Heart left ventricle (tissue), 16 donors: ENCODE measurements at regions of chr4 and their contacts with region 1.

Region 1: GRCh38 chr4:104064646-104065577 is 345.1 kb upstream of the TACR3 start:
- DNase-seq: peak in 3 of 5 donors; percentile 16 to 45 (median 25)
- ATAC-seq: peak in 3 of 4 donors; percentile 63 to 70 (median 69)
- H3K4me3 ChIP-seq: no peak overlapping the region
- H3K27ac ChIP-seq: no peak overlapping the region
- H3K4me1 ChIP-seq: no peaks in the 10 kb centered on the region
- H3K27me3 ChIP-seq: no peaks in the 10 kb centered on the region
- CTCF ChIP-seq: peak in 11 of 12 donors; percentile 27 to 63 (median 48)
- POLR2A ChIP-seq: no peak

Region 2: DNA sequence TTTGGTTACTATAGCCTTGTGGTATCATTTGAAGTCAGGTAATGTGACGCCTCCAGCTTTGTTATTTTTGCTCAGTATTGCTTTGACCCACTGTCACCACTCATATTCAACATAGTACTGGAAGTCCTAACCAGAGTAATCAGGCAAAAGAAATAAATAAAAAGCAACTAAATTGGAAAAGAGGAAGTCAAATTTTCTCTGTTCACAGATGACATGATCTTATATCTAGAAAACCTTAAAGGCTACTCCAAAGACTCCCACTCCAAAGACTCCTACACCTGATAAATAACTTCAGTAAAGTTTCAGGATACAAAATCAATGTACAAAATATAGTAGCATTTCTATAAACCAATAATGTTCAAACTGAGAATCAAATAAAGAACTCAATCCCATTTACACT is 81.1 kb after region 1 on chr4:
- intact Hi-C with region 1: no loop called
- DNase-seq: no peak
- ATAC-seq: no peak
- H3K4me3 ChIP-seq: no peak overlapping the region
- H3K27ac ChIP-seq: no peak overlapping the region
- H3K4me1 ChIP-seq: no peaks in the 10 kb centered on the region
- H3K27me3 ChIP-seq: no peaks in the 10 kb centered on the region
- CTCF ChIP-seq: no peak
- POLR2A ChIP-seq: no peak

Region 3: GRCh38 chr4:104451573-104451972 is 386.7 kb after region 1 on chr4:
- intact Hi-C with region 1: loop called in 1 of 10 experiments (anchors 5 kb)
- DNase-seq: no peak
- ATAC-seq: peak in 1 of 4 donors; percentile 49
- H3K4me3 ChIP-seq: no peak overlapping the region
- H3K27ac ChIP-seq: no peak overlapping the region
- H3K4me1 ChIP-seq: no peaks in the 10 kb centered on the region
- H3K27me3 ChIP-seq: no peaks in the 10 kb centered on the region
- CTCF ChIP-seq: peak in 10 of 12 donors; percentile 15 to 55 (median 32)
- POLR2A ChIP-seq: no peak

Region 4: GRCh38 chr4:104531390-104531789 is 466.5 kb after region 1 on chr4:
- intact Hi-C with region 1: loop called in 3 of 10 experiments (anchors 5 to 10 kb)
- DNase-seq: no peak
- ATAC-seq: no peak
- H3K4me3 ChIP-seq: no peak overlapping the region
- H3K27ac ChIP-seq: no peak overlapping the region
- H3K4me1 ChIP-seq: no peaks in the 10 kb centered on the region
- H3K27me3 ChIP-seq: no peaks in the 10 kb centered on the region
- CTCF ChIP-seq: peak in 5 of 12 donors; percentile 26 to 55 (median 35)
- POLR2A ChIP-seq: no peak